ENCODE measurements at regions of chr3 and their contacts with region 1.

Region 1: DNA sequence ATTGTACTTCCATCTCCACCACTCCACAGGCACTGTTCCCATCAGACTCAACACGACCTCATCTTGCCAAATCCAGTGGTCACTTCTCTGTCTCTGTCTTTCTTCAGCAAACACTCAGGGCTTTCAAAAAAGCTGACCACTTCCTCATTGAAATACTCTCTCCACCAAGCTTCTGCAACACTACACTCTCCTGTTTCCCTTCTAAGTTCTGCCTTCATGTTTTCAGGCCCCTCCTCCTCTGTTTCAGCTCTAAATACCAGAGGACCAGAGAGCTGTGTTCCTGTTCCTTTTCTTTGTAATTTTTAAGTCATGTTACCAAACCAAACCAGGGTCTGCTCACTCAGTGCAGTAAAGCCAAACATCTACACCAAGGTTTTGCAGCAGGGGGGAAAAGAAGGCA is 33.8 kb upstream of the ACP3 start:
- DNase-seq: no peak
- ATAC-seq: no peak
- H3K4me3 ChIP-seq: no peak overlapping the region
- H3K27ac ChIP-seq: no peak overlapping the region
- H3K4me1 ChIP-seq: no peaks in the 10 kb centered on the region
- H3K27me3 ChIP-seq: no peaks in the 10 kb centered on the region
- CTCF ChIP-seq: no peak
- POLR2A ChIP-seq: no peak
- RAD21 ChIP-seq: no peak

Region 2: GRCh38 chr3:132174500-132174899 is 108.9 kb before region 1 on chr3:
- CTCF ChIA-PET with region 1: no interaction called
- POLR2A ChIA-PET with region 1: no interaction called
- RAD21 ChIA-PET with region 1: no interaction called
- intact Hi-C with region 1: no loop called
- DNase-seq: no peak
- ATAC-seq: no peak
- H3K4me3 ChIP-seq: no peak overlapping the region
- H3K27ac ChIP-seq: no peak overlapping the region
- H3K4me1 ChIP-seq: no peaks in the 10 kb centered on the region
- H3K27me3 ChIP-seq: peaks cover 40% of the 10 kb centered on the region
- CTCF ChIP-seq: no peak
- POLR2A ChIP-seq: no peak
- RAD21 ChIP-seq: no peak

Region 3: GRCh38 chr3:132268956-132269355 is 14.5 kb before region 1 on chr3:
- CTCF ChIA-PET with region 1: interaction called, 3 read pairs
- POLR2A ChIA-PET with region 1: interaction called, 4 read pairs
- RAD21 ChIA-PET with region 1: no interaction called
- intact Hi-C with region 1: loop called (anchors 1 kb)
- DNase-seq: peak; percentile 56
- ATAC-seq: peak; percentile 67
- H3K4me3 ChIP-seq: no peak overlapping the region
- H3K27ac ChIP-seq: no peak overlapping the region
- H3K4me1 ChIP-seq: no peaks in the 10 kb centered on the region; a peak in 1 of 4 replicates
- H3K27me3 ChIP-seq: no peaks in the 10 kb centered on the region
- CTCF ChIP-seq: peak; percentile 38 to 60 (median 58)
- POLR2A ChIP-seq: no peak
- RAD21 ChIP-seq: peak; percentile 42